Mammary epithelial cell (primary cell): ENCODE measurements at regions of chr19 and their contacts with region 1.

Region 1: DNA sequence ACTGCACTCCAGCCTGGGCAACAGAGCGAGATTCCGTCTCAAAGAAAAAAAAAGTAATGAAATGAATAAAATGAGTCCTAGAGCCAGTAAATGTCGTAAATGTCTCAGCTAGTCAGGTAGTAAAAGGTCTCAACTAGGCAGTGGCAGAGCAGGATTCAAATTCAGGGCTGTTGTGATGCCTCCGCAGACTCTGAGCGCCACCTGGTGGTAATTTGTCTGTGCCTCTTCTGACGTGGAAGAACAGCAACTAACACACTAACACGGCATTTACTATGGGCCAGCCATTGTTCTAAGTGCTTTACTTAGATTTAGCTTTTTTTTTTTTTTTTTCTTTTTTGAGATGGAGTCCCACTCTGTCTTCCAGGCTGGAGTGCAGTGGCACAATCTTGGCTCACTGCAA is 30.2 kb downstream of the CYP2F1 start:
- DNase-seq: peak; percentile 62
- H3K4me3 ChIP-seq: no peak overlapping the region
- H3K27ac ChIP-seq: no peak overlapping the region
- H3K4me1 ChIP-seq: no peaks in the 10 kb centered on the region
- H3K27me3 ChIP-seq: no peaks in the 10 kb centered on the region
- CTCF ChIP-seq: peak; percentile 83 to 86

Region 2: DNA sequence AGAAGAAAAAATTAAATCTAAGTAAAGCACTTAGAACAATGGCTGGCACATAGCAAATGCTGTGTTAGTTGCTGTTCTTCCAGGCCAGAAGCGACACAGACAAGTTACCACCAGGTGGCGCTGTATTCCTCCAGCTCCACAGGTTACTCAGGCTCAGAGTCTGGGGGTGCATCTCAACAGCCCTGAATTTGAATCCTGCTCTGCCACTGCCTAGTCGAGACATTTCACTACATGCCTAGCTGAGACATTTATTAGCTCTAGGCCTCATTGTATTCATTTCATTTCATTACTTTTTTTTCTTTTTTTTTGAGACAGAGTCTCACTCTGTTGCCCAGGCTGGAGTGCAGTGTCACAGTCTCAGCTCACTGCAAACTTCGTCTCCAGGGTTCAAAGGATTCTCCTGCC is 169.8 kb before region 1 on chr19:
- CTCF ChIA-PET with region 1: no interaction called
- dilution Hi-C with region 1: no loop called
- in situ Hi-C with region 1: loop called (anchors 10 to 25 kb)
- intact Hi-C with region 1: loop called (anchors 1 kb)
- DNase-seq: peak; percentile 35
- H3K4me3 ChIP-seq: no peak overlapping the region
- H3K27ac ChIP-seq: no peak overlapping the region
- H3K4me1 ChIP-seq: no peaks in the 10 kb centered on the region
- H3K27me3 ChIP-seq: no peaks in the 10 kb centered on the region
- CTCF ChIP-seq: peak; percentile 84 to 89

Region 3: GRCh38 chr19:40982594-40983101 is 161.8 kb before region 1 on chr19:
- CTCF ChIA-PET with region 1: interaction called, 11 read pairs
- dilution Hi-C with region 1: no loop called
- in situ Hi-C with region 1: loop called in 1 of 2 experiments (anchors 10 kb)
- intact Hi-C with region 1: no loop called
- DNase-seq: peak; percentile 18
- H3K4me3 ChIP-seq: no peak overlapping the region
- H3K27ac ChIP-seq: no peak overlapping the region
- H3K4me1 ChIP-seq: no peaks in the 10 kb centered on the region
- H3K27me3 ChIP-seq: no peaks in the 10 kb centered on the region
- CTCF ChIP-seq: no peak